Dorsolateral prefrontal cortex (tissue), 120 donors: ENCODE measurements at regions of chr1 and their contacts with region 1.

Region 1: DNA sequence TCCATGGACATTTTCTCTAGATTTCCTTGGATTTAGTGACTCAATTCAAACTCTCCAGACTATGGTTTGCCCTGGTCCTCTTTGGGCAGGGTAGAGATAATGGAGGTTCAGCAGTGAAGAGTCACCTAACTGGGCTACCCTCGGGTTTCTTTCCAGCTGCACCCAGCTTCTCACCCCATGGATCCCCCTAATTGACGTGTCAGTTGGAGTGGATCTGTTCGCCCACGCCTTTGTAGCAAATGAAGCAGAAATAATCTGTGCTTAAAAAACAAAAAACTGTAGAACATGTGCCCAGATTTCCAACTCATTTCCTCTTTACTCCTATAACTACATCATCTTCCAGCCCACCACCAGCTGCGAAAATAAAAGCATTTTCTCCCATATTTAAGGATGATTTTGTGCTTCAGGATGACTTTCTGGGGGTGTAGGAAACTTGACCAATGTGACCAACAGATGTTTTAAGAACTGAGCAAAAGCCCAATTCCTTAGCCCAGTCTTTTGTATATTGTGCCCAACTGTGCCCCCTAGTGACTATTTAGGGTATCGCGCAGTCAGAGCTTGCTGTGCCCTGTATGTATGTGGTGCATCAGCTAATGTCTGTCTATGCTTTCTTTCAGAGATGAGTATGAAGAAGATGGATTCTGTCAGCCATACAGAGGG is 66.5 kb upstream of the UBE2U start:
- DNase-seq: peak; percentile 68 to 96 (median 75)
- H3K4me3 ChIP-seq: no peak overlapping the region
- H3K27ac ChIP-seq: peak overlapping the region in 5 of 59 donors; percentile 17 to 64 (median 21)
- H3K27me3 ChIP-seq: no peaks in the 10 kb centered on the region
- CTCF ChIP-seq: peak; percentile 73 to 98 (median 93)

Region 2: DNA sequence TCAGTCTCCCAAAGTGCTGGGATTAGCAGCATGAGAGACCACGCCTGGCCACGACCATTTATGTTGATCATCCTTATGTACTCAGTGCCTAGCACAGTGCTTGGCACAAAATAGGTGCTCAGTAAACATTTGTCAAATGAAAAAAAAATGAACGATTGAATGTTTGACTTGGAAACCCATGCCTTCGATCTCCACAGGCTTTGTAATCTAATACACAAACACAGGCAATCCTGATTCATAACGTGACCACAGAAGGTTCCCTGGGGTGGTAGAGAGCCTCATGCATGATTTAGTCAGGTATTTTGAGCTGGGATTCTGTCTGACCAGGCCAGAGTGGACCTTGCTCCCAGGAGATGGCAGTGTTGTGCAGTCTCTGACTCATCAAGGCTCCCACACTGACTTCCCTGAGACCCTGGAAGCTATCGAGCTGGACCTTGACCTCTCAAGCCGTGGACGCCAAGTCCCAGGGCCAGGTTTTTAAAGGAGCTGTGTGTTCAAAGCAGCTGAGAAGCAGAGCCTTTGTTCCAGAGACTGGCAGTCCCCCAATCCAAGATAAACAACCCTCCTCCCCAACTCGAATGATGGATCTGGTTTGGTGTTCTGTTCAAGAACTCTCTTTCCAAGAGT is 462.5 kb before region 1 on chr1:
- intact Hi-C with region 1: loop called in 1 of 2 experiments (anchors 10 kb)
- DNase-seq: peak in 9 of 10 donors; percentile 36 to 64 (median 57)
- H3K4me3 ChIP-seq: no peak overlapping the region
- H3K27ac ChIP-seq: peak overlapping the region in 7 of 59 donors; percentile 8 to 57 (median 27)
- H3K27me3 ChIP-seq: no peaks in the 10 kb centered on the region
- CTCF ChIP-seq: peak in 55 of 56 donors; percentile 23 to 81 (median 63)

Region 3: GRCh38 chr1:63773815-63774616 is 362.9 kb before region 1 on chr1 and contains the start of gene ROR1:
- intact Hi-C with region 1: loop called (anchors 2 to 5 kb)
- DNase-seq: peak; percentile 75 to 94 (median 81)
- H3K4me3 ChIP-seq: peak within 1 kb of the TSS; percentile 55 to 87 (median 72)
- H3K27ac ChIP-seq: peak within 1 kb of the TSS in 46 of 59 donors; percentile 31 to 89 (median 74)
- H3K27me3 ChIP-seq: peaks cover 0 to 12% (median 0%) of the 10 kb centered on the region in 45 donors
- CTCF ChIP-seq: peak in 55 of 56 donors; percentile 30 to 87 (median 69)
- total RNA-seq, gene ROR1: 0.53 to 5.6 (median 3.1) TPM

Region 4: GRCh38 chr1:63877816-63878215 is 259.1 kb before region 1 on chr1:
- intact Hi-C with region 1: no loop called
- DNase-seq: no peak
- H3K4me3 ChIP-seq: no peak overlapping the region
- H3K27ac ChIP-seq: no peak overlapping the region
- H3K27me3 ChIP-seq: no peaks in the 10 kb centered on the region
- CTCF ChIP-seq: no peak

Region 5: DNA sequence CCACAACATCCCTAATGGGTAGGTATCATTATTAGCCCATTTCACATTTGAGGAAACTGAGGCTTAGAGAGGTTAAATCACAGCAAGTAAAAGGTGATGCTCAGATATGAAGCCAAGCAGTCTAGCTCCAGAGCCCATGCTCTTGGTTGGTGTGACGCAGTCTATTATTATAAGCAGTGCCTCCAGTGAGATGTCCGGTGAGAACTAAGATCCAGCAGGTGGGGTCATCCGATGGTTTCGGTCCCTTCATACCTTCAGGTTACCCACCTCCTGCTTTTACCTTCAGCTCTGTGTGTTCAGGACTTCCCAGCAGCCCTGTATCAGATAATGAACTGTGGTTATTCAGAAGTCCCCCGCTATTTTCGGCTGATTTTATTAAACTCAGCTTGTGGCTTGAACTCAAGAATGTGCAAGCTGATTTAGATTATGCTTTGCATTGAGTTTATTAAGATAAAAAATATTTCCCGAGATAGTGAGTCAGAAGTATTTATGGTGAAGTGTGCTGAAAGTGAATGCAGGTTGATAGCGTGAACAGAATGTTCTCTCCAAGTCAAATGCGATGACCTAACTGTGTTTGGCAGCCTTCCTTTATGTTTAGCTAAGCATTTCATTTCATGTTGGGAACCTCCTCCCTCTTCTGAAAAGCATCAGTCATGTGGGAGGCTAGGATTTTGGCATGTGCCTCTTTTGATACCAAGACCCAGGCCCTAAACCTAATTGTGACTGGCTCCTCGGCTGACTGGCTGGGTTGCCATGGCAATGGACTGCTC is 94.4 kb before region 1 on chr1:
- intact Hi-C with region 1: loop called in 1 of 2 experiments (anchors 10 kb)
- DNase-seq: peak in 1 of 10 donors; percentile 35
- H3K4me3 ChIP-seq: peak overlapping the region in 2 of 59 donors; percentile 3 to 6
- H3K27ac ChIP-seq: peak overlapping the region in 46 of 59 donors; percentile 2 to 96 (median 66)
- H3K27me3 ChIP-seq: no peaks in the 10 kb centered on the region
- CTCF ChIP-seq: no peak

Region 6: GRCh38 chr1:64231153-64231552 is 94.3 kb after region 1 on chr1:
- intact Hi-C with region 1: loop called in 1 of 2 experiments (anchors 10 kb)
- DNase-seq: no peak
- H3K4me3 ChIP-seq: no peak overlapping the region
- H3K27ac ChIP-seq: no peak overlapping the region
- H3K27me3 ChIP-seq: peaks cover 0 to 3% (median 0%) of the 10 kb centered on the region in 45 donors
- CTCF ChIP-seq: no peak